ENCODE measurements at regions of chr10 and their contacts with region 1.

Region 1: GRCh38 chr10:86960003-86960862 is 1.8 kb downstream of the SNCG start:
- DNase-seq: peak; percentile 75
- ATAC-seq: peak; percentile 62

Region 2: DNA sequence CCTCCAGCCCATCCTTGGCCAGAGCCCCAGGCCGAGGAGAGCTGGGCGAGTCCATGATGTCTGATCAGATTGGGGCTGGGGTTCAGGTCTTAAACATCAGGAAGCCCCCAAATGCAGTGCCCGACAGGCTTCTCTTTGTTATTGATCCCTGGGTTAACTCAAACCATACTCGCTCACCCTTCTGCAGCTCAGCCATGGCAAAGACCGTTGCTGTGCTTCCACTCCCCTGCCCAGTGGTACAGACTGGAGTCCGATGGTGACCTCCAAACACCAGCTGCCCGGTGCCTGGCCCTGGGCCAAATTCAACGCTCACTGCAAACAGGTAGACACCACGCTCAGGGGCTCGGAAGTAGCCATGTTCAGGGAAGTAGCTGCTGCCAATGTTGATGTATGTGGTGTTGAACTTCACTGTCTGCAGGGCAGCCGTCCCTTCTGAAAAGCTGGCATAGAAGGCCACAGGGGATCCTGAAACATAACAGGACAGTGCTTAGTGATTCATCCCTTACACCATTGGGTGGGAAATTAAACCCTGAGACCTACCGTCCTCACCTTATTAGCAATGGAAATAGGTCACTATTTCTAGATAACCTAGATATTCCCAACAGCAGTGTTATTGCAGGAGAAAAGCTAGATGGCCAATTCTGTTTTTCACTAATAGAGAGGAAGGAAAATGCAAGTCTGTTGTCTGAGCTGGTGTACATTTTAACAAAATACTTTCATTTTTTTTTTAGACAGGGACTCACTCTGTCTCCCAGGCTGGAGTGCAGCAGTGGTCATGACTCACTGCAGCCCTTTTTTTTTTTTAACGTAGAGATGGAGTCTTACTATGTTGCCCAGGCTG is 23.4 kb before region 1 on chr10:
- intact Hi-C with region 1: loop called (anchors 2 kb)
- DNase-seq: peak; percentile 71
- ATAC-seq: no peak

Measured in Right ventricle myocardium inferior (tissue), 1 donor.